Astrocyte of the cerebellum (primary cell): ENCODE measurements at regions of chr2 and their contacts with region 1.

Region 1: DNA sequence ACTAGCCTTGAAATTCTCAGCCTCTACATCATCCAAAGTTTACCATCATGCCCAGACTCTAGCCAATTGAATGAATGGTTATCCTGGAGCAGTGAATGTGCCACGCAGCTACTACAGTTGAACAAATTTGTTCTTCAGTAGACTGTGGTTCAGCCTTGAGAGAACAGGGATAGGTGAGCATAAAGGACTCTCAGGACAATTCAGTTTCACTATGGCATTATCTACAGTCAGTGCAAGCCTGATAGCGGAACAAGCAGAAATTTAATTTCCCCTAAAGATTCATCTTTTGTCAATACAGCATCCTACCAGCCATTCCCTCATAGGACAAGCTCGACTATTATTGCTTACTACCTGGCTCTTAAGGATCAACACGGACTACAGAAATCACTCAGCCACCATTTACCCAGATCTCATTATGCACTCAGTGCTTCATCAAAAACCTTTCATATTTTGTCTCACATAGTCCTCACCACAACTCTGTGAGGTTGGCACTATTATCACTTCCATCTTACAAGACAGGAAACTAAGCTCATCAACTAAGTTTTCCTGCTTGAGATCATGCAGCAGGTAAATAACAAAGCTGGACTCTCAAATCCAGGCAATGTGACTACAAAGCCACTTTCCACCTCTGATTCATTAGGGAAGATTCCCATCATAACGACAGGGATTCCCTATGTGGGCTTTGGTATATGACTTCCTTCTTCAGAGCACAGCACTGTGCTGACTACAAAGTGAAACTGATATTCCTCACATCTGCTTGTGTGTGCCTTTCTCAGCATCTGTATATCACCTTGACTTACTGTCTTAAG is 181.5 kb upstream of the ACVR2A start:
- DNase-seq: no peak
- H3K4me3 ChIP-seq: no peak overlapping the region
- CTCF ChIP-seq: no peak

Region 2: GRCh38 chr2:147709655-147710054 is 46.3 kb after region 1 on chr2:
- in situ Hi-C with region 1: loop called (anchors 5 kb)
- DNase-seq: no peak
- H3K4me3 ChIP-seq: no peak overlapping the region
- CTCF ChIP-seq: no peak